Naive thymus-derived CD4-positive, alpha-beta T cell (primary cell): ENCODE measurements at regions of chr6 and their contacts with region 1.

Region 1: GRCh38 chr6:87139236-87139635 is 16.1 kb upstream of the ZNF292 start:
- DNase-seq: peak in 7 of 9 donors; percentile 42 to 72 (median 65)
- ATAC-seq: peak; percentile 82
- H3K4me3 ChIP-seq: no peak overlapping the region
- H3K4me3 Mint-ChIP-seq: peak overlapping the region in 1 of 10 donors; percentile 12
- H3K27ac ChIP-seq: no peak overlapping the region
- H3K27ac Mint-ChIP-seq: no peak overlapping the region
- H3K4me1 ChIP-seq: no peaks in the 10 kb centered on the region
- H3K4me1 Mint-ChIP-seq: peaks cover 0 to 6% (median 4%) of the 10 kb centered on the region in 7 donors
- H3K27me3 ChIP-seq: no peaks in the 10 kb centered on the region
- H3K27me3 Mint-ChIP-seq: peaks cover 0 to 59% (median 18%) of the 10 kb centered on the region in 5 donors

Region 2: GRCh38 chr6:87322304-87323212 is 183.3 kb after region 1 on chr6 and contains the start of gene SMIM8:
- CTCF ChIA-PET with region 1: no interaction called
- POLR2A ChIA-PET with region 1: no interaction called
- intact Hi-C with region 1: loop called in 1 of 2 experiments (anchors 2 kb)
- DNase-seq: peak; percentile 67 to 94 (median 81)
- ATAC-seq: peak; percentile 100
- H3K4me3 ChIP-seq: peak within 1 kb of the TSS; percentile 82
- H3K4me3 Mint-ChIP-seq: peak within 1 kb of the TSS; percentile 94 to 99 (median 98)
- H3K27ac ChIP-seq: peak within 1 kb of the TSS; percentile 80
- H3K27ac Mint-ChIP-seq: peak within 1 kb of the TSS; percentile 77 to 95 (median 93)
- H3K4me1 ChIP-seq: no peaks in the 10 kb centered on the region
- H3K4me1 Mint-ChIP-seq: peaks cover 14 to 32% (median 26%) of the 10 kb centered on the region in 7 donors
- H3K27me3 ChIP-seq: no peaks in the 10 kb centered on the region
- H3K27me3 Mint-ChIP-seq: peaks cover 0 to 6% (median 5%) of the 10 kb centered on the region in 5 donors
- total RNA-seq, gene SMIM8: 7.3 to 15.7 (median 10.5) TPM

Region 3: GRCh38 chr6:87472525-87473418 is 333.5 kb after region 1 on chr6 and contains the start of gene SLC35A1:
- CTCF ChIA-PET with region 1: no interaction called
- POLR2A ChIA-PET with region 1: no interaction called
- intact Hi-C with region 1: loop called in 1 of 2 experiments (anchors 1 kb)
- DNase-seq: peak; percentile 78 to 92 (median 87)
- ATAC-seq: peak; percentile 97
- H3K4me3 ChIP-seq: peak within 1 kb of the TSS; percentile 81
- H3K4me3 Mint-ChIP-seq: peak within 1 kb of the TSS; percentile 88 to 99 (median 98)
- H3K27ac ChIP-seq: peak within 1 kb of the TSS; percentile 93
- H3K27ac Mint-ChIP-seq: peak within 1 kb of the TSS; percentile 95 to 100 (median 99)
- H3K4me1 ChIP-seq: peaks cover 9 to 11% of the 10 kb centered on the region in 2 donors
- H3K4me1 Mint-ChIP-seq: peaks cover 14 to 31% (median 20%) of the 10 kb centered on the region in 7 donors
- H3K27me3 ChIP-seq: no peaks in the 10 kb centered on the region
- H3K27me3 Mint-ChIP-seq: peaks cover 2 to 14% (median 9%) of the 10 kb centered on the region in 5 donors
- total RNA-seq, gene SLC35A1: 10.4 to 23.4 (median 15.6) TPM

Region 4: DNA sequence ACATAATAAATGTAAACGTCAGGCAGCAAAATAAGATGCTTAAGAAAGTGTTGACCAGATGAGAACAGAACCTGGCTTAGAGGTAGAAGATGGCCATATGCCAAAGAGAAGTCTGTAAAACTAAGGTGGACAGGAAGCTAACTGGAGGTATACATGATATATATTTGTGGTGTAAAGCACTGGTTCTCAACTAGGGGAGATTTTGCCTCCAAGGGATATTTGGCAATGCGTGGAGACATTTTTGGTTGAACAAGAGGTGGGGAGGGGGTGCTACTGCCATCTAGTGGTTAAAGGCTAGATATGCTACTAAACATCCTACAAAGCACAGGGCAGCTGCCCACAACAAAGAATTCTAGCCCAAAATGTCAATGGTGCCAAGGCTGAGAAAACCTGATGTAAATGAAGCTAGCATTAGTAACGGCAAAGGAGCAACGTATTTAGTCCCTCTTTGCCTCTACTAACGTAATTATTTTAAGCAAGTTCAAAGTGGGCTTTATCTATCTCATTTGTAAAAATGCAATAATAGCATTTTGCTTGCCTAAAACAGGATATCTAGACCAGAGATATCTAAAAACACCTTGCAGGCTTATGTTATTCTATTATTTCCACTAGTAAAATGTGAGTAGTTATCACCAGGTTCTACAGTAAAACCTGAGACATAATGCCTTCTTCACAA is 1641.6 kb after region 1 on chr6:
- CTCF ChIA-PET with region 1: no interaction called
- POLR2A ChIA-PET with region 1: interaction called, 3 read pairs
- intact Hi-C with region 1: loop called in 1 of 2 experiments (anchors 5 kb)
- DNase-seq: peak; percentile 8 to 64 (median 53)
- ATAC-seq: peak; percentile 92
- H3K4me3 ChIP-seq: no peak overlapping the region
- H3K4me3 Mint-ChIP-seq: no peak overlapping the region
- H3K27ac ChIP-seq: no peak overlapping the region
- H3K27ac Mint-ChIP-seq: no peak overlapping the region
- H3K4me1 ChIP-seq: no peaks in the 10 kb centered on the region
- H3K4me1 Mint-ChIP-seq: peaks cover 0 to 10% (median 3%) of the 10 kb centered on the region in 7 donors
- H3K27me3 ChIP-seq: no peaks in the 10 kb centered on the region
- H3K27me3 Mint-ChIP-seq: no peaks in the 10 kb centered on the region